ENCODE measurements at regions of chr3 and their contacts with region 1.

Region 1: GRCh38 chr3:47669026-47669749 is 90.5 kb upstream of the CSPG5 start:
- DNase-seq: no peak
- ATAC-seq: no peak
- H3K4me3 ChIP-seq: no peak overlapping the region
- H3K4me3 Mint-ChIP-seq: no peak overlapping the region
- H3K27ac ChIP-seq: no peak overlapping the region
- H3K27ac Mint-ChIP-seq: peak overlapping the region in 2 of 9 donors; percentile 37 to 52
- H3K4me1 ChIP-seq: no peaks in the 10 kb centered on the region
- H3K4me1 Mint-ChIP-seq: peaks cover 0 to 7% (median 0%) of the 10 kb centered on the region in 7 donors
- H3K27me3 ChIP-seq: no peaks in the 10 kb centered on the region
- H3K27me3 Mint-ChIP-seq: no peaks in the 10 kb centered on the region

Region 2: DNA sequence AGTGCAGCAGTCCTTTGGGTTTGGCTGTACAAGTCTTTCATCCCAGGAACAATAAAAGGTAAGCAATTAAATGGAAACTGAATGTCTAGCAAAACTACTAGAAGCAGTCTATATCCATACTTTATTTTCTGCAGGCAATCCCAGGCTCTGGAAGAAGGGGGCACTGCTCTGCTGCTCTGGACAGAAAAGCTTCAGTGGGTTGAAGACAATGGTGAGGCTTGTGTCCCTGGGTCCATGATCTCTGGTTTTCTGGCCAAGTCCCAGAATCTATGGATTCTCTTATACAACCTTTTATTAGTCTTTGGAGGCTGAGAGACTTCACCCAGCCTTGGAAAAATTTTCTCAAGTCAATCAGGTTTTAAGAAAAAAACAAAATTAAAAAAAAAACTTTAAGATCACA is 229.1 kb before region 1 on chr3:
- CTCF ChIA-PET with region 1: no interaction called
- POLR2A ChIA-PET with region 1: no interaction called
- intact Hi-C with region 1: no loop called
- DNase-seq: no peak
- ATAC-seq: no peak
- H3K4me3 ChIP-seq: no peak overlapping the region
- H3K4me3 Mint-ChIP-seq: no peak overlapping the region
- H3K27ac ChIP-seq: no peak overlapping the region
- H3K27ac Mint-ChIP-seq: peak overlapping the region in 1 of 9 donors; percentile 9
- H3K4me1 ChIP-seq: no peaks in the 10 kb centered on the region
- H3K4me1 Mint-ChIP-seq: peaks cover 2 to 18% (median 11%) of the 10 kb centered on the region in 7 donors
- H3K27me3 ChIP-seq: no peaks in the 10 kb centered on the region
- H3K27me3 Mint-ChIP-seq: no peaks in the 10 kb centered on the region

Region 3: GRCh38 chr3:47715928-47716327 is 46.7 kb after region 1 on chr3:
- CTCF ChIA-PET with region 1: no interaction called
- POLR2A ChIA-PET with region 1: no interaction called
- intact Hi-C with region 1: loop called in 1 of 2 experiments (anchors 5 kb)
- DNase-seq: no peak
- ATAC-seq: no peak
- H3K4me3 ChIP-seq: no peak overlapping the region
- H3K4me3 Mint-ChIP-seq: no peak overlapping the region
- H3K27ac ChIP-seq: no peak overlapping the region
- H3K27ac Mint-ChIP-seq: peak overlapping the region in 3 of 9 donors; percentile 0 to 29 (median 12)
- H3K4me1 ChIP-seq: no peaks in the 10 kb centered on the region
- H3K4me1 Mint-ChIP-seq: peaks cover 0 to 20% (median 5%) of the 10 kb centered on the region in 7 donors
- H3K27me3 ChIP-seq: no peaks in the 10 kb centered on the region
- H3K27me3 Mint-ChIP-seq: no peaks in the 10 kb centered on the region

Region 4: GRCh38 chr3:48077815-48078214 is 408.6 kb after region 1 on chr3:
- CTCF ChIA-PET with region 1: no interaction called
- POLR2A ChIA-PET with region 1: no interaction called
- intact Hi-C with region 1: no loop called
- DNase-seq: no peak
- ATAC-seq: no peak
- H3K4me3 ChIP-seq: no peak overlapping the region
- H3K4me3 Mint-ChIP-seq: no peak overlapping the region
- H3K27ac ChIP-seq: no peak overlapping the region
- H3K27ac Mint-ChIP-seq: no peak overlapping the region
- H3K4me1 ChIP-seq: no peaks in the 10 kb centered on the region
- H3K4me1 Mint-ChIP-seq: peaks cover 0 to 14% (median 6%) of the 10 kb centered on the region in 7 donors
- H3K27me3 ChIP-seq: no peaks in the 10 kb centered on the region
- H3K27me3 Mint-ChIP-seq: no peaks in the 10 kb centered on the region

Region 5: GRCh38 chr3:48811524-48811923 is 1142.3 kb after region 1 on chr3:
- CTCF ChIA-PET with region 1: no interaction called
- POLR2A ChIA-PET with region 1: no interaction called
- intact Hi-C with region 1: no loop called
- DNase-seq: no peak
- ATAC-seq: no peak
- H3K4me3 ChIP-seq: no peak overlapping the region
- H3K4me3 Mint-ChIP-seq: peak overlapping the region in 5 of 10 donors; percentile 16 to 51 (median 33)
- H3K27ac ChIP-seq: peak overlapping the region; percentile 64
- H3K27ac Mint-ChIP-seq: peak overlapping the region; percentile 64 to 97 (median 89)
- H3K4me1 ChIP-seq: peaks cover 16 to 18% of the 10 kb centered on the region in 2 donors
- H3K4me1 Mint-ChIP-seq: peaks cover 22 to 47% (median 40%) of the 10 kb centered on the region in 7 donors
- H3K27me3 ChIP-seq: no peaks in the 10 kb centered on the region
- H3K27me3 Mint-ChIP-seq: no peaks in the 10 kb centered on the region

Measured in naive thymus-derived CD4-positive, alpha-beta T cell (primary cell).